ENCODE measurements at regions of chr6 and their contacts with region 1.

Region 1: GRCh38 chr6:34638834-34639736 is 57.5 kb downstream of the ILRUN start:
- DNase-seq: peak; percentile 63
- CTCF ChIP-seq: no peak

Region 2: GRCh38 chr6:34627296-34627695 is 11.8 kb before region 1 on chr6:
- CTCF ChIA-PET with region 1: interaction called, 12 read pairs
- POLR2A ChIA-PET with region 1: interaction called, 3 read pairs
- DNase-seq: no peak
- CTCF ChIP-seq: no peak

Region 3: GRCh38 chr6:34650823-34651222 is 11.7 kb after region 1 on chr6:
- CTCF ChIA-PET with region 1: interaction called, 27 read pairs
- POLR2A ChIA-PET with region 1: interaction called, 14 read pairs
- DNase-seq: no peak
- CTCF ChIP-seq: no peak

Measured in GM10248 (cell line).